ENCODE measurements at regions of chr16 and their contacts with region 1.

Region 1: GRCh38 chr16:14132696-14133048 is 61.6 kb downstream of the MRTFB start:
- DNase-seq: no peak
- ATAC-seq: peak; percentile 33; the same call in 1 of the 2 replicates
- H3K4me3 ChIP-seq: no peak overlapping the region
- H3K27ac ChIP-seq: no peak overlapping the region
- H3K4me1 ChIP-seq: no peaks in the 10 kb centered on the region; the same call in 1 of the 2 replicates
- H3K27me3 ChIP-seq: no peaks in the 10 kb centered on the region
- CTCF ChIP-seq: no peak

Region 2: DNA sequence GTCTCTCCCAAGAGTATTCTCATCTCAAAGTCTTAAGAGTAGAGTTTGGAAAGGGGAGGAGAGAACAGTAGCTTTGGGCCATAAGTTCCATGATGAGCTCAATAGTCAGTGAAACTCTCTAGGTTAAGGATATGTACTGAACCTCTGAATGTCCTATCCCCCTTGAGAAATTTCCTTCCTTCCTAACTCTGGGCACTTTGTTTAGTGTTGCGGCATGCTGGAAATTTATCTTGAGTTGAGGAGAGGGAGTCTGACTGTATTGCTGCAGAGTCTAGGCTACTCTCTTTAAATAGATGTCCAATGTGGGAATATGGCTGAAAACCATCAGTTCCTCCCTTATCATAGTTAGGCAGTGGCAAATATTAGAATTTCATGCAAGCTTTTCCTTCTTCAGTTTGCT is 45.5 kb before region 1 on chr16:
- CTCF ChIA-PET with region 1: no interaction called
- POLR2A ChIA-PET with region 1: no interaction called
- intact Hi-C with region 1: no loop called
- DNase-seq: no peak
- ATAC-seq: no peak
- H3K4me3 ChIP-seq: no peak overlapping the region
- H3K27ac ChIP-seq: no peak overlapping the region
- H3K4me1 ChIP-seq: no peaks in the 10 kb centered on the region
- H3K27me3 ChIP-seq: no peaks in the 10 kb centered on the region
- CTCF ChIP-seq: no peak

Region 3: DNA sequence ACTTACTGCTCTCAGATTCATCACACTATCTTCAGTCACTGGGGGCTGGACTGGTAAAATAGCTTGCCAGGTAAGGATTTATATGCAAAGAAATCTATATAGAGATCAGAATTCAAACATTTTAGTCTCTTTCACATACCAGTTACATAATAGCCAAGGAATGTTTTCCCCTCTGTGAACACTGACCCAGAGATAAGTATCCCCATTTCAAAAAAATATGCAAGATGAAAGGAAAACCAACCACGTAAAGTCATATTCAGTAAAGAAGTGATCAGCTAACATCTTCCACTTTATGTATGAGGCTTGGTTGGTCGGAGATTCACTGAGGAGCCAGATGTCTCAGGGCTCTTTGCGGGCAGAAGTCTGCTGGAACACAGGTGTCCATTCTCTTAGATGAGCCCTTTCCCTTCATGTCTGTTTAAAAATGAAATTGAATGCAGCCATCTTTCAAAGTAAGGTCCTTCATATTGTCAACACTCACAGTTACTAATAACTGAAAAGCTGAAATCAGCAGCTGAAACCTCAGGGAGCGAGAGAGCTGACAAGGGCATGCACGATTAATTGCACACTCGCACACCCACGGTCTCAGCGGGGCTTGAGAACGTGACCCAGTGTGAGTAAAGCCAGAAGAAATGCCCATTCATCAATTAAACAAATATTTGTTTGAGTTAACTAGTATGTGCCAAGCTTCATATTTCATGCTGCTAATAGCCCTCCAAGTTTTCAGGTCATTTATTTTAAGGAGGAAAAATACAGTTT is 99.6 kb after region 1 on chr16:
- CTCF ChIA-PET with region 1: no interaction called
- POLR2A ChIA-PET with region 1: no interaction called
- intact Hi-C with region 1: loop called (anchors 10 kb)
- DNase-seq: peak; percentile 3
- ATAC-seq: peak; percentile 82
- H3K4me3 ChIP-seq: no peak overlapping the region
- H3K27ac ChIP-seq: no peak overlapping the region
- H3K4me1 ChIP-seq: peaks cover 9% of the 10 kb centered on the region
- H3K27me3 ChIP-seq: no peaks in the 10 kb centered on the region
- CTCF ChIP-seq: no peak

Measured in PC-3 (cell line).